SK-N-SH (cell line): ENCODE measurements at regions of chr15 and their contacts with region 1.

Region 1: DNA sequence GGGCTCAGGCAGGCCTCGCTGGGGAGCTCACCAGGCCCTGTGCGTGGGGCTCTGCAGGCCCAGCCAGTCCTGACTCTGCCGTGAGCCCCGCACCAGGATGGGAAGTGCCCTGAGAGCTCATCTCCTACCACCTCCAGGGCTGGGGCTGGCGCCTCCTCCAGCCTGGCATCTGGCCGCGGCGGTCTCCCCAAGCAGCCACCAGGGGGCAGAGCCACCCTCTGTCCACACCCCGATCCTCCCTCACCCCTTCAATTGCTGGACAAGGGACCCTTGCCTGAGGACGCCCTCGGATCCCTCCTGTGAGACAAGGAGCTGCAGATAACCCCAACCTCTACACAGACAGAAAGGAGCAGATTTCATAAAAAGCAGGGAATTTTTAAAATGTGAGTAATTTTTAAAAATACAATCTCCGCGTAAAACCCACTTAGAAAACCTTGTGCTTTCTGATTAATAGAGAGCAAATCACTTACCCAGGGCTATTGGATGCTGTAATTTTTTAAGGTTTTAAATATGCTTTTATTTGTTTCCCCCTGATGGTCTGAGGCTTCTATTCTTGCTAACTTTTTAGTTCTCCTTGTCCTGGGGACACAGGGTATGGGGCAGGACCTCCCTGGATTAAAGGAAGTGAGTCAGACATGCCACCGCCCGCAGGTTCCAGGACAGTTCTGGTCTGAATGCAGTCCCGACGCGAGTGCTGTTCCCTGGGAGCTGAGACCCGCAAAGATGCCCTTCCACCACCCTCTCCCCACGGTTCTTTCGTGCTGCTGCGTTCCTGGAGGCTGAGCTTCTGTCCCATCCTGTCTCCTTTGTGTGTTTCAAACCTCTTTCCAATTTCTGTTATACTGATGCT is 52.3 kb upstream of the CHRNA7 start:
- DNase-seq: peak; percentile 86
- H3K4me3 ChIP-seq: peak overlapping the region in 1 of 2 experiments; percentile 29; a peak in 2 of 4 replicates
- H3K27ac ChIP-seq: peak overlapping the region in 1 of 2 experiments; percentile 78; a peak in 2 of 4 replicates
- H3K4me1 ChIP-seq: peaks cover 0 to 62% of the 10 kb centered on the region in 2 experiments; a peak in 2 of 4 replicates
- H3K27me3 ChIP-seq: no peaks in the 10 kb centered on the region
- CTCF ChIP-seq: peak; percentile 79
- EP300 ChIP-seq: no peak
- RAD21 ChIP-seq: peak; percentile 88

Region 2: GRCh38 chr15:31887246-31887645 is 90.8 kb before region 1 on chr15:
- CTCF ChIA-PET with region 1: interaction called, 36 read pairs
- POLR2A ChIA-PET with region 1: interaction called, 3 read pairs
- DNase-seq: peak; percentile 70
- H3K4me3 ChIP-seq: peak overlapping the region in 1 of 2 experiments; percentile 19; a peak in 1 of 4 replicates
- H3K27ac ChIP-seq: 0 out of 4 replicates have a peak overlapping the region, but pooled peaks of 1 of the 2 experiments have one; percentile 16
- H3K4me1 ChIP-seq: peaks cover 0 to 8% of the 10 kb centered on the region in 2 experiments; a peak in 2 of 4 replicates
- H3K27me3 ChIP-seq: no peaks in the 10 kb centered on the region
- CTCF ChIP-seq: no peak
- EP300 ChIP-seq: no peak
- RAD21 ChIP-seq: peak; percentile 59

Region 3: DNA sequence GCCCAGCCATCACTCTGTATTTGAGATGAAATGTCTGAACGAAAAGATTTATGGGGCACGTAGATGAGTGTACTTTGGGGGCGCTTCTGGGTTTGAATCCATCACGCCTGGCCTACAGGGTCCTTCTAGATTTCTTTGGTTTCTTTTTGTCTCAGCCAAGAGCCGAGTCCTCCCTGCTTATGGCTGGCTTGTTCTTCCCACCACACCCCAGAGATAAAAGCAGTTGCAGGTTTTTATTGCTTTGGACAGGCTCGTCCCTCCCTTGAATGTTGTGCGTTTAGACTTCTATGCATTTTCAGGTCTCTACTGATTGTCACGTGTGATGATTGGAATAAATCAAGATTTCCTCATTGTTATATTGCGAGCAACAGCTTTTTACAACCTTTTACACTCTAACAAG is 52.5 kb before region 1 on chr15:
- CTCF ChIA-PET with region 1: no interaction called
- POLR2A ChIA-PET with region 1: no interaction called
- DNase-seq: no peak
- H3K4me3 ChIP-seq: no peak overlapping the region
- H3K27ac ChIP-seq: no peak overlapping the region
- H3K4me1 ChIP-seq: no peaks in the 10 kb centered on the region
- H3K27me3 ChIP-seq: no peaks in the 10 kb centered on the region
- CTCF ChIP-seq: no peak
- EP300 ChIP-seq: no peak
- RAD21 ChIP-seq: no peak

Region 4: DNA sequence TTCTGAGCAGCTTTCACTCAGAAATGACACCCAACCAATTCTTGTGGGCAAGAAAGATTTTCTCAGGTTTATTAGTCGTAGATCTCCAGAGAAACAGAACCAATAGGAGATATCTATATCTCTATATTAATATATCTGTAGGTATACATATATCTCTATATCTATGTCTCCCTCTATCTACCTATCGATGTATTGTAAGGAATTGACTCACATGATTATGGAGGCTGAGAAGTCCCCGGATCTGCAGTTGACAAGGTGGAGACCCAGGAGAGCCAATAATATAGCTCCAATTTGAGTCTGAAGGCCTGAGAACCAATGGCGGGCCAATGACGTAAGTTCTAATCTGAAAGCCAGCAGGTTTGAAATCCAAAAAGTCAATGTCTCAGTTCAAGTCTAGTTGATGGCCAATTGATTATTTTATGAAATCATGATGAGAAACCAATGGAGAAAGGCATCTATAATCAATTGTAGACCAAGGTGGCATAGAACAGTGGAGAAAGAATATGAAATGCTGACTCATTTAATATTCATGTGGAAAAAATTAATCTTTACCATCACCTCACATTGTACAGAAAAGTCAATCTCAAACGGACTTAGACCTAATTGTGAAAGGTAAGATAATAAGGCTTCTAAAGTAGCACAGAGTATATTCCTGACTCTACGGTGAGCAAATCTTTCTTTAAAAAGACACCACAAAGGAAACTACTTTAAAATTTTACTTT is 13.3 kb before region 1 on chr15:
- CTCF ChIA-PET with region 1: interaction called, 17 read pairs
- POLR2A ChIA-PET with region 1: no interaction called
- DNase-seq: no peak
- H3K4me3 ChIP-seq: no peak overlapping the region
- H3K27ac ChIP-seq: no peak overlapping the region
- H3K4me1 ChIP-seq: no peaks in the 10 kb centered on the region
- H3K27me3 ChIP-seq: no peaks in the 10 kb centered on the region
- CTCF ChIP-seq: no peak
- EP300 ChIP-seq: no peak
- RAD21 ChIP-seq: no peak

Region 5: GRCh38 chr15:32014953-32015352 is 36.9 kb after region 1 on chr15:
- CTCF ChIA-PET with region 1: interaction called, 10 read pairs
- POLR2A ChIA-PET with region 1: no interaction called
- DNase-seq: no peak
- H3K4me3 ChIP-seq: no peak overlapping the region
- H3K27ac ChIP-seq: no peak overlapping the region
- H3K4me1 ChIP-seq: peaks cover 0 to 2% of the 10 kb centered on the region in 2 experiments; a peak in 1 of 4 replicates
- H3K27me3 ChIP-seq: no peaks in the 10 kb centered on the region
- CTCF ChIP-seq: no peak
- EP300 ChIP-seq: no peak
- RAD21 ChIP-seq: no peak

Region 6: GRCh38 chr15:32029862-32030781 is 52.1 kb after region 1 on chr15 and contains the start of gene CHRNA7:
- CTCF ChIA-PET with region 1: interaction called, 167 read pairs
- POLR2A ChIA-PET with region 1: interaction called, 17 read pairs
- DNase-seq: peak; percentile 94
- H3K4me3 ChIP-seq: peak within 1 kb of the TSS; percentile 58 to 59
- H3K27ac ChIP-seq: peak within 1 kb of the TSS in 1 of 2 experiments; percentile 92; a peak in 2 of 4 replicates
- H3K4me1 ChIP-seq: peaks cover 0 to 34% of the 10 kb centered on the region in 2 experiments; a peak in 2 of 4 replicates
- H3K27me3 ChIP-seq: peaks cover 23% of the 10 kb centered on the region; the same call in 1 of the 2 replicates
- CTCF ChIP-seq: peak; percentile 10; the same call in 1 of the 2 replicates
- EP300 ChIP-seq: no peak
- RAD21 ChIP-seq: no peak
- polyA plus RNA-seq, gene CHRNA7: 0.38 and 0.80 TPM in 2 replicates

Region 7: GRCh38 chr15:32119694-32120330 is 141.8 kb after region 1 on chr15:
- CTCF ChIA-PET with region 1: interaction called, 13 read pairs
- POLR2A ChIA-PET with region 1: no interaction called
- DNase-seq: peak; percentile 72
- H3K4me3 ChIP-seq: no peak overlapping the region
- H3K27ac ChIP-seq: peak overlapping the region in 1 of 2 experiments; percentile 93; a peak in 2 of 4 replicates
- H3K4me1 ChIP-seq: peaks cover 0 to 66% of the 10 kb centered on the region in 2 experiments; a peak in 2 of 4 replicates
- H3K27me3 ChIP-seq: no peaks in the 10 kb centered on the region
- CTCF ChIP-seq: no peak
- EP300 ChIP-seq: peak in 1 of 2 experiments; percentile 60; a peak in 2 of 4 replicates
- RAD21 ChIP-seq: no peak